ENCODE measurements at regions of chr9 and their contacts with region 1.

Region 1: DNA sequence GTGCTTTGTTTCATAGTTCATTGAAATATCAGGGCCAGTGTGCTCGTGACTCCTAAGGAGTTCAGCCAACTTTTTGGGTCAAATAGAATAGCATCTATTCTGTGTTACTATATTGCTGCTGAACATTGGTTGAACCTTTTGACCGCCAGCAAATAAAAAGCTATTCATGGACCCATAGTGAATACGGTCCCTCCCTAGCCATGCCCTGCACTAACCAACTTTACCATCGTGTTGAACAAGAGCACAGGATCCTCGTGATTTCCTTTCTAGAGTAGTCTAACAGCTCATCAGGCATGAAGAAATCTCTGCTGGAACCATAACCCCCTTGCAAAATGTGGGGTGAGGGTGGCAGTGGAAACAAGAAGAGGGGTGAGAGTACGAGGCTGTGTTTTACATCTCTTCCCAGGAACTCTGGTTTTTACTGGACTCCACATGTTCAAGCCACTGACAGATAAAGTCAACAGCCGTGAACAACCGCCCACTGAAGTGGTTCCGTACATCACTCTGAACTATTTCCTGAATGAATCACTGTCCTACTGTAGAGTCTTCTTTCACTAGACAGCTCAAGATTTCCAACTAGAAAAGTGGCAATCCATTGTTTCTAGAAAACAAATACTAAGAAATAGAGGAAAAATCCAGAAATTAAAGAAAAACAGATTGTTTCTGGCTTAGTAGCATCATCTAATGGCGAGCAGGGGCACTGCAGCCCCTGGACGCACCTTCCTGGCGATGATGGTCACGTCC is 70.1 kb upstream of the SPATA31E1 start:
- DNase-seq: peak; percentile 48 to 60
- ATAC-seq: peak; percentile 81 to 89
- H3K4me3 ChIP-seq: no peak overlapping the region
- H3K27ac ChIP-seq: peak overlapping the region; percentile 6 to 62; a peak in 4 of 6 replicates
- H3K4me1 ChIP-seq: 0 out of 3 replicates have a peak, but pooled peaks cover 4% of the 10 kb centered on the region
- CTCF ChIP-seq: peak; percentile 98
- EP300 ChIP-seq: no peak
- POLR2A ChIP-seq: no peak
- RAD21 ChIP-seq: peak; percentile 97 to 98

Region 2: DNA sequence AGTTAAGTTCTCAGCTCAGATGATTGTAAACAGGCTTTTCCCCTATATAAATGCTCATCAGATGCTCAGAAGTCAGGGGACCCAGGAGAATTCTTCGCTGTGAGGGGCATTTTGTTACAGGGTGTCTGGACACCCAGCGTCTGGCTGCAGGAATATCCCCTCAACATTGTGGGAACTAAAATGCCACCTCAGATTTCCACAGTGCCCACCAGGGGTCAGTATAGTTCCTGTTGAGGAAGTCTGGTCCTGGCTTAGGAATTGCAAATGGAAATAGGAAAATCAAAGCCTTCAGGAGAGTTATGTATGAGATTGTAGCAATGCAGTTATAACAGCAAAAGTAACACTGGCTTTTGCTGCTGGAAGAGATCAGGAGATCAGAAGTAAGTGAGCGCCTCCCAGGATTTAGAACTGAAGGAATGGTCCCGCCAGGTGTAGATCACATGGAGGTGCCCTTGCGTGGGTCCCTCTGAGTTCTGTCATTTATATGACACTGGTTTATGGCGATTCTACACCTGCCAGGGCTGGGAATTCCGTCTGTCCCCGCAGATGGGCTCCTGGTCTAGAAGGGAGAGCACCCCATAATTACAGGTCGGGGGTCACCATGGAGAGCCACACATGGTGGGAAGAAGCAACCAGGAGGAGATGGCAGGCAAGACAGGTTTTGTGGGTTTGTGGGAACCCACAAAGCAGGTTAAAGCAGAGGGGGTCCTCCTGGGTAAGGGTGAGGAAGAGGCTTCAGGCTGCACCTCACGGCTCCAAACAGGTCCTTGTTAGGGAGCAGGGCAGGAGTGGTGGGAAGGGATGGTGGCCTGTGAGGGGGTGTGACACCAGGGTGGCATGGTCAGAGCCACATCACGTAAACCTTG is 133.7 kb before region 1 on chr9:
- CTCF ChIA-PET with region 1: interaction called, 473 read pairs
- POLR2A ChIA-PET with region 1: no interaction called
- DNase-seq: peak; percentile 73 to 75
- ATAC-seq: peak; percentile 56 to 85; a peak in 5 of 6 replicates
- H3K4me3 ChIP-seq: no peak overlapping the region
- H3K27ac ChIP-seq: no peak overlapping the region; a peak in 1 of 6 replicates
- H3K4me1 ChIP-seq: peaks cover 7% of the 10 kb centered on the region; the same call in 2 of the 3 replicates
- CTCF ChIP-seq: peak; percentile 82
- EP300 ChIP-seq: no peak
- POLR2A ChIP-seq: no peak
- RAD21 ChIP-seq: peak; percentile 78 to 83

Region 3: GRCh38 chr9:87701931-87702421 is 110.6 kb before region 1 on chr9:
- CTCF ChIA-PET with region 1: interaction called, 14 read pairs
- POLR2A ChIA-PET with region 1: no interaction called
- DNase-seq: no peak
- ATAC-seq: no peak
- H3K4me3 ChIP-seq: no peak overlapping the region
- H3K27ac ChIP-seq: 0 out of 6 replicates have a peak overlapping the region, but pooled peaks of 1 of the 2 experiments have one; percentile 20
- H3K4me1 ChIP-seq: peaks cover 28% of the 10 kb centered on the region
- CTCF ChIP-seq: no peak
- EP300 ChIP-seq: no peak
- POLR2A ChIP-seq: no peak
- RAD21 ChIP-seq: no peak

Region 4: DNA sequence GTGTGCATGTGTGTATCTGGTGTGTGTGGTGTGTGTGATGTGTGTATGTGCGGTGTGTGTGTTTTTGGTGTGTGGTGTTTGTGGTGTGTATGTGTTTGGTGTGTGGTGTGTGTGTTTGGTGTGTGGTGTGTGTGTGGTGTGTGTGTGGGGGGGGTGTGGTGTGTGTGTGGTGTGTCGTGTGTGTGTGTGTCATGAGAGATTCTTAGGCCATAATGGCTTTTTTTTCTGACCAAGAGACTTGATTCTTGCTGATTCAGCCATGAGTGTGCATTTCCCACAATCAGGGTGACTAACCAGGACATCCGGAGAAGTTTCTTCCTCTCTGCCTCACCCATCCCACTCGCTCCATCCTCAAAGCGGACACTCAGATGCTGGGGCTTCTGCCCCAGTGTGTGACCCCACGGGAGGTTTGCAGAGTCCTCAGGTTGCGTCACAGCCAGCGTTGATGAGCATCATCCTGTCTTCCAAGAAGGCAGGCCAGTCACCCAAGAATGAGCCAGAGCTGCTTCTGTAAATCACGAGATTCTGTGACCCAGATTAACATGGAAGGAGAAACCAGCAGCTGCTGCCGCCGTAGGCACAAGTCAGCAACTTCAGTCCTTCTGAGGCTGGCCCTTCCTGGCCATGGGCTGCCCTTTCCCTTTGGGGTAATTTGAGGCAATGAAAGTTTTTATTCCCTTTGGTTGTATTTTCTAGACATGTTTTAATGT is 99.1 kb before region 1 on chr9:
- CTCF ChIA-PET with region 1: interaction called, 13 read pairs
- POLR2A ChIA-PET with region 1: no interaction called
- DNase-seq: peak; percentile 89 to 99
- ATAC-seq: peak; percentile 93
- H3K4me3 ChIP-seq: peak overlapping the region; percentile 24; the same call in 1 of the 3 replicates
- H3K27ac ChIP-seq: peak overlapping the region; percentile 95
- H3K4me1 ChIP-seq: peaks cover 55% of the 10 kb centered on the region
- CTCF ChIP-seq: no peak; the same call in 2 of the 3 replicates
- EP300 ChIP-seq: peak; percentile 92 to 97; a peak in 4 of 5 replicates
- POLR2A ChIP-seq: 0 out of 2 replicates have a peak, but pooled peaks have one; percentile 27
- RAD21 ChIP-seq: peak; percentile 9 to 42; a peak in 2 of 5 replicates

Region 5: DNA sequence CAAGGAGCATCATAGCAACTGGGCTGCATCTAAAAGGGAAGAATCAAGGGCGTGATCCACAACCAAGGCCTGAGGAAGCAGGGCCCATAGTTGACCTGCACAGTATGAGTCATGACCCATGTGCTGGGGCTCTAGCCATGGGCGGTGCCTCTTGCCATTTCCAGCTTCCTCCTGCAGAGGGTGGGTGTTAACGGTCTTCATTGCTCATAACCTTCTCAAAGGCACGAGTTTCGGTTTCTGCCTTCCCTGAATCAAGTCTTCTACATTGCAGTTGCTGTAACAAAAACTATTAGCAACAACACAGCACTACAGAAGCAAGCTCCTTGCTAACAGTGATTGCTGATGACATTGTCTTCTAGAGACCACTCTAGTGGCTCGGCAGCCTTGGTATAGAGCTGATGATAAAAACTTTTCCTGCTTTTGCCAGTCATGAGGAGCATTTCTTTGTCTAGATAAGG is 19.7 kb before region 1 on chr9:
- CTCF ChIA-PET with region 1: interaction called, 150 read pairs
- POLR2A ChIA-PET with region 1: no interaction called
- DNase-seq: peak; percentile 84 to 95
- ATAC-seq: peak; percentile 97 to 98
- H3K4me3 ChIP-seq: peak overlapping the region; percentile 28
- H3K27ac ChIP-seq: peak overlapping the region; percentile 92 to 94
- H3K4me1 ChIP-seq: peaks cover 42% of the 10 kb centered on the region
- CTCF ChIP-seq: 0 out of 3 replicates have a peak, but pooled peaks have one; percentile 14
- EP300 ChIP-seq: no peak; a peak in 1 of 5 replicates
- POLR2A ChIP-seq: no peak
- RAD21 ChIP-seq: peak in 1 of 2 experiments; percentile 33; a peak in 2 of 5 replicates

Region 6: GRCh38 chr9:87834357-87834756 is 21.8 kb after region 1 on chr9:
- CTCF ChIA-PET with region 1: interaction called, 16 read pairs
- POLR2A ChIA-PET with region 1: no interaction called
- DNase-seq: peak in 1 of 2 experiments; percentile 10
- ATAC-seq: peak in 1 of 2 experiments; percentile 64; a peak in 3 of 6 replicates
- H3K4me3 ChIP-seq: no peak overlapping the region
- H3K27ac ChIP-seq: no peak overlapping the region
- H3K4me1 ChIP-seq: peaks cover 3% of the 10 kb centered on the region; the same call in 2 of the 3 replicates
- CTCF ChIP-seq: no peak
- EP300 ChIP-seq: no peak
- POLR2A ChIP-seq: no peak
- RAD21 ChIP-seq: peak in 1 of 2 experiments; percentile 24; a peak in 2 of 5 replicates

Measured in A549 (cell line).